Heart left ventricle (tissue), 16 donors: ENCODE measurements at regions of chrX and their contacts with region 1.

Region 1: DNA sequence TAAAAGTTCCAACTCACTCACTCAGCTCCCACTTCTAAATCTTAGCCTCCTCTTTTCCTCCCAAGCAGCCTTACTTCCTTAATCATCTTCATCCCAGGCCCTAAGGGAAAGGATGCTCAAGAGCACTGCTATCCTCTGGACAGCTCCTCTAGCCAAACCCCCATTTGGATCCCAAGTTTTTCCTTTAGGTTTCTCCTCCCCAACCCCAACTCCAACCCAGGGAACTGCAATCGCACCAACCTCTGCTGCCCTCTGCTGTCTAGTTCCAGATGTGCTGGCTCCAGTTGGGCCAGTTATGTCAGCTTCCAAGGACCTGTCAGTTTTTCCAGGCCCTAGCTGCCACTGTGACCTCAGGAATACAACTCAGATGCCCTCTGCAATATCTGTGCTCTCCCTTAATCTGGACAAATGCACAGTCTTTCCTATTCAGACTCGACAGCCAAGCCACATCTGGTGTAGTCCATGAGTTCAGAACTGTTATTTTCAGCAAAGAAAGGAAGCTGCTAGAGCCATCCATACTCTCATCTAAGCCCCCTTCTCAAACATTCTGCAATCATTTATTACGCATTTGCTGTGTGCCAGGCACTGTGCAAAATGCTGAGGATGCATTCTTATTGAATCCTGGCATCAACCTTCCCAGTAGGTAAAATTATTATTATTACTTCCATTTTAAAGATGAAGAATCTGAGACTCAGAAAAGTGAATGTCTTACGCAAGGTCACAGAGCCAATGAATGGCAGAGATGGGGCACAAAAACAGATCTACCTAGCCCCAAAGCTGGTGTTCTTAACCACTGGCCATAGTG is 12.3 kb upstream of the XPNPEP2 start:
- DNase-seq: peak; percentile 48 to 68 (median 65)
- ATAC-seq: peak in 3 of 4 donors; percentile 82 to 90 (median 87)
- H3K4me3 ChIP-seq: no peak overlapping the region
- H3K27ac ChIP-seq: no peak overlapping the region
- H3K4me1 ChIP-seq: peaks cover 0 to 2% (median 0%) of the 10 kb centered on the region in 12 donors
- H3K27me3 ChIP-seq: peaks cover 0 to 4% (median 0%) of the 10 kb centered on the region in 9 donors
- CTCF ChIP-seq: peak; percentile 46 to 80 (median 67)
- POLR2A ChIP-seq: no peak

Region 2: GRCh38 chrX:129637217-129638109 is 89.0 kb before region 1 on chrX:
- intact Hi-C with region 1: loop called (anchors 1 to 5 kb)
- DNase-seq: peak; percentile 50 to 77 (median 61)
- ATAC-seq: peak; percentile 55 to 79 (median 73)
- H3K4me3 ChIP-seq: no peak overlapping the region
- H3K27ac ChIP-seq: no peak overlapping the region
- H3K4me1 ChIP-seq: peaks cover 0 to 7% (median 0%) of the 10 kb centered on the region in 12 donors
- H3K27me3 ChIP-seq: peaks cover 0 to 7% (median 0%) of the 10 kb centered on the region in 9 donors
- CTCF ChIP-seq: peak; percentile 76 to 92 (median 83)
- POLR2A ChIP-seq: no peak

Region 3: DNA sequence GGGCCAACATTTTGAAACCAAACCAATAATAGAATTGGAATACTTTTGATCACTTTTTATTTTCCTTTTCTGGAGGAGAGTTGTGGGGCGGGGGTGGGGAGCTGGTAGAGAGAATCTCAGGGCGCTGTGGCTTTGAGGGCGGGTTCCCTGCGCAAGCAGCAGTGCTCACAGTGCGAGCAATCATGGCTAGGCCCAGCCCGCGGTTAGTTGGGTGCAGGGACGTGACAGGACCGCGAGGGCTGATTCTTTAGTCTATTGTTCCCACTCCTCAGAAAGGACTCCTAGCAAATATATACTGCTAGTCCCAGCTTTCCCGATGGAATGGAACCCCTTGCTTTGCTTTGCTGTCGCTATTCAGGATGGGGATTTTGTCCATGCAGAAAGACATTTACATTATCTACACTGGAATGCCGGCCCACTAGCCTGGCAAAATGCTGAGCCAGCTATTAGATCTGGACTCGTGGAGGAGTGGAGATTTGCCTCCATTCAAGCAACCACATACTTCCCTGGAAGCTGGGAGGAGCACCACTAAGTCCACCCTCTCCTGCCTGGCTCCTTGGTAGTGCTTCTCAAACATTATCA is 47.8 kb before region 1 on chrX:
- intact Hi-C with region 1: loop called in 1 of 10 experiments (anchors 5 kb)
- DNase-seq: peak in 1 of 5 donors; percentile 41
- ATAC-seq: peak in 2 of 4 donors; percentile 15 to 16
- H3K4me3 ChIP-seq: peak overlapping the region in 11 of 12 donors; percentile 11 to 57 (median 44)
- H3K27ac ChIP-seq: peak overlapping the region in 11 of 12 donors; percentile 62 to 87 (median 79)
- H3K4me1 ChIP-seq: peaks cover 0 to 16% (median 2%) of the 10 kb centered on the region in 12 donors
- H3K27me3 ChIP-seq: no peaks in the 10 kb centered on the region
- CTCF ChIP-seq: no peak
- POLR2A ChIP-seq: no peak